K562 (cell line): ENCODE measurements at regions of chr3 and their contacts with region 1.

Region 1: GRCh38 chr3:187101184-187102072 is 37.9 kb downstream of the RPL39L start:
- DNase-seq: peak; percentile 42 to 76 (median 59)
- ATAC-seq: peak; percentile 90
- H3K4me3 ChIP-seq: no peak overlapping the region
- H3K27ac ChIP-seq: no peak overlapping the region
- H3K4me1 ChIP-seq: peaks cover 10 to 16% of the 10 kb centered on the region in 2 experiments
- H3K27me3 ChIP-seq: no peaks in the 10 kb centered on the region
- CTCF ChIP-seq: no peak
- EP300 ChIP-seq: no peak
- POLR2A ChIP-seq: no peak
- RAD21 ChIP-seq: no peak

Region 2: GRCh38 chr3:186985661-186986364 is 115.6 kb before region 1 on chr3:
- CTCF ChIA-PET with region 1: no interaction called
- POLR2A ChIA-PET with region 1: no interaction called
- in situ Hi-C with region 1: no loop called
- intact Hi-C with region 1: loop called (anchors 5 kb)
- DNase-seq: peak in 1 of 4 experiments; percentile 30
- ATAC-seq: peak; percentile 21
- H3K4me3 ChIP-seq: no peak overlapping the region
- H3K27ac ChIP-seq: peak overlapping the region; percentile 12; the same call in 1 of the 3 replicates
- H3K4me1 ChIP-seq: peaks cover 12 to 30% of the 10 kb centered on the region in 2 experiments
- H3K27me3 ChIP-seq: no peaks in the 10 kb centered on the region
- CTCF ChIP-seq: no peak
- EP300 ChIP-seq: no peak
- POLR2A ChIP-seq: no peak
- RAD21 ChIP-seq: no peak

Region 3: GRCh38 chr3:187011915-187012314 is 89.5 kb before region 1 on chr3:
- CTCF ChIA-PET with region 1: no interaction called
- POLR2A ChIA-PET with region 1: no interaction called
- in situ Hi-C with region 1: no loop called
- intact Hi-C with region 1: no loop called
- DNase-seq: no peak
- ATAC-seq: no peak
- H3K4me3 ChIP-seq: no peak overlapping the region
- H3K27ac ChIP-seq: no peak overlapping the region
- H3K4me1 ChIP-seq: peaks cover 4 to 8% of the 10 kb centered on the region in 2 experiments; a peak in 4 of 5 replicates
- H3K27me3 ChIP-seq: no peaks in the 10 kb centered on the region
- CTCF ChIP-seq: no peak
- EP300 ChIP-seq: no peak
- POLR2A ChIP-seq: no peak
- RAD21 ChIP-seq: no peak

Region 4: GRCh38 chr3:187082758-187083375 is 18.6 kb before region 1 on chr3:
- CTCF ChIA-PET with region 1: no interaction called
- POLR2A ChIA-PET with region 1: interaction called, 5 read pairs
- in situ Hi-C with region 1: no loop called
- intact Hi-C with region 1: loop called (anchors 1 kb)
- DNase-seq: no peak
- ATAC-seq: no peak
- H3K4me3 ChIP-seq: no peak overlapping the region
- H3K27ac ChIP-seq: no peak overlapping the region
- H3K4me1 ChIP-seq: no peaks in the 10 kb centered on the region
- H3K27me3 ChIP-seq: no peaks in the 10 kb centered on the region
- CTCF ChIP-seq: no peak
- EP300 ChIP-seq: no peak
- POLR2A ChIP-seq: no peak
- RAD21 ChIP-seq: no peak